Mucosa of descending colon (tissue), 3 donors: ENCODE measurements at regions of chr12 and their contacts with region 1.

Region 1: GRCh38 chr12:78473136-78473535 is 391.4 kb upstream of the SYT1 start:
- DNase-seq: no peak
- ATAC-seq: no peak
- H3K4me3 ChIP-seq: no peak overlapping the region
- H3K4me1 ChIP-seq: no peaks in the 10 kb centered on the region
- CTCF ChIP-seq: no peak

Region 2: DNA sequence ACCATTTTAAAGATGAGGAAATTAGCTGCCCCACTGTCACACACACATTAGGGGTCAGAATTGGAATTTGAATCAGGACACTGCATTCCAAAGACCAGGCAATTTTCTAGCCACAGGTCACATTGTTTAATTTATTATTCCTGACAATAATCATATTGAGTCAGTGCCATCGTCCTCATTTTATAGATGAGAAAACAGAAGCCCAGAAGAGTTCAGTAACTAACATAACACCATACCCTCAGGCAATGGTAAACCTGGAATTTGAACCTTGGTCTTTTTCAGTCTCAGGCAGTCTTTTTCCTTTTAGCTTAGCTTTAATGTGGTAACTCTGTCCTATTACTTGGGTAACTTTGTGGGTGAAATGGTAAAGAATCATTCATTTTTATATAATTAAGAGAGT is 61.2 kb after region 1 on chr12:
- intact Hi-C with region 1: loop called in 1 of 2 experiments (anchors 2 kb)
- DNase-seq: no peak
- ATAC-seq: no peak
- H3K4me3 ChIP-seq: no peak overlapping the region
- H3K4me1 ChIP-seq: no peaks in the 10 kb centered on the region
- CTCF ChIP-seq: no peak